ENCODE measurements at regions of chr2 and their contacts with region 1.

Region 1: DNA sequence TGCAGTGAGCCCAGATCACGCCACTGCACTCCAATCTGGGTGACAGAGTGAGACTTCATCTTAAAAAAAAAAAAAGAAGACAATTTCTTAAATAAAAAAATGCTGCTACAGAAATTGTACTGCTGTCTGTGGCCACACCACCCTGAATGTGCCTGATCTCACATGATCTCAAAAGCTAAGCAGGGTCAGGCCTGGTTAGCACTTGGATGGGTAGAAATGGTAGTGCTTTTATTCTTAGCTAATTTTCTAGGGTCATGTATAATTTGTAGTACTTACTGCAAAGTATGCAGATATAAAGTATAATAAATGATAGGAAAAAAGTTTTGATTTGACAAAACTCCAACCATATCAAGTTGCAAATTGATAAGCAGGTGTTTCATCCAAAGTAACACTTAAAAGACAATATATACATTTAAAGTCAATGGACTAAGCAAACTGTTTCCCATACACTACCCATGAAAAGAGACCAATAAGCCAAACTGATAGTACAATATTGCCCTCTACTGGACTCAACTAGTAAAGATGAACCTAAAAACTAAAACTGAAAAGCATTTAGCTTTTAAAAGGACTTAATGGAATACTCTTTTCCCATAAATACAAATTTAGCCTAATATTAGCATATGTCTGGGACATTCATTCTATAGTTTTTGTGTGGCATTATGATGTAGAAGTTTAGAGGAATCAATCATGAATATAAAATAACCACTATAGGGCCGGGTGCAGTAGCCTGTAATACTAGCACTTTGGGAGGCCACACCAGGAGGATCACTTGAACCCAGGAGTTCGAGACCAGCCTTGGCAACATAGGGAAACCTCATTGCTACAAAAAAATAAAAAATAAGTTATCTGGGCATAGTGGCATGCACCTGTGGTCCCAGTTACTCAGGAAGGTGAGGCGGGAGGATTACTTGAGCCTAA is 18.6 kb upstream of the PEX13 start:
- DNase-seq: no peak

Region 2: GRCh38 chr2:60707750-60708371 is 291.0 kb before region 1 on chr2:
- intact Hi-C with region 1: loop called (anchors 2 kb)
- DNase-seq: no peak

Region 3: DNA sequence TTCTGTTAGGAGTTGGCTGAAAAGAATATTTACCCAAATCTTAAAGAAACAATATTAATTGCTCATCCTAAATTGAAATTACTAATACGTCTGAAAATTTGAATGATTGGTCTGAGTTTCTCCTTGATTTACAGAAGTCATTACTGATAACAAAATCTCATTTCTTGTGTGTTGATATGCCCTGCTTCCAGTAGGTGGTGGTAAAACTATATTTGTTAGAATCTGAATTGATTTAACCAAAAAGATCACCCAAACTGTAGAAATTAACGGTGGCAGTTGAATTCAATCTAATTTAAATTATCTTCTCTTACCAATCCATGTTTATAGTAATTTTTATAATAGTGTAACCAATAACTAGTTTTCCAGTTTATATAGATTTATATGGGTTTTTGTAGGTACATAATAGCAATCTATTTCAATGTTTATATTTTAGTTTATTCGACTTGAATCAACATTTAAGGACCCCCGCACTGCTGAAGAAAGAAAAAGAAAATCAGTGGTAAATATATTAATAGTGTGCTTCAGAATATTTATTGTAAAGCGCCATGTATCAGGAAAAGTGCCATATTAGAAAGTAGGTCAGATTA is 204.5 kb before region 1 on chr2:
- intact Hi-C with region 1: loop called (anchors 2 kb)
- DNase-seq: no peak

Region 4: GRCh38 chr2:60926737-60927552 is 71.9 kb before region 1 on chr2:
- intact Hi-C with region 1: no loop called
- DNase-seq: no peak

Region 5: DNA sequence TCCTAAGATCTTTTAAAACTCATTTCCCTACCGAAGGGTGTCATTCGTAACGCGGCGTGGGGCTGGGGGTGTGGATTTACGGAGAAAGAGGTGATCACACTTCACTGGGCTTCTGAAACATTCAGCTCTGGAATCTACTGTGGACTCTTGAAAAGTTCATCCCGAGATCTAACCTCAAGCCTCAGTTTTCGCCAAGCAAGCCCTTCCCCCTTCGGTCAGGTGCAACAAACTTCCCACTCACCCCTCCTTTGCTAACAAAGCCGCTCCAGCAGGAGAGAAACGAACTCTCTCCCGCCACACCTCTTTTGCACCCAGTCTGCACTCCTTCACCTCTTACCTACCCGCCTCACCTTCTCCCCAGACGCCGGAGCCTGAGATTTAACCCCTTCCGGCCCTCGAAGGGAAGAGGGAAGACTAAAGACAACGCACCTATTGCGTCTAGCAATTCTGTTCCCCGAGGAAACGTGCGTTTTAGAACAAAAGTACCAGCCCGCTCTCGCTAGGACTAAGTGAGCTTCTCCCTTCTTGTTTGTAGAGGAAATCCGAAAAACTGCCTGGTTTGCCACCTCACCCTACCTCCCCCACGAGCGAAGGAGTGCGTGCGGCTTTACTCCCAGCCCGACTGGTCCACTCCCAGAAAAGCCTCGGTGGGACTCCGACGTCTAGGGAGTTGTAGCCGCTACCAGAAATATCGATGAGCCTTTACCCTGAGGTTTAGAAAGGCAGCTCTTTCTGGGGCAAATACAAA is 18.1 kb after region 1 on chr2:
- intact Hi-C with region 1: no loop called
- DNase-seq: peak; percentile 55 to 95 (median 66)